A673 (cell line): ENCODE measurements at regions of chr11 and their contacts with region 1.

Region 1: DNA sequence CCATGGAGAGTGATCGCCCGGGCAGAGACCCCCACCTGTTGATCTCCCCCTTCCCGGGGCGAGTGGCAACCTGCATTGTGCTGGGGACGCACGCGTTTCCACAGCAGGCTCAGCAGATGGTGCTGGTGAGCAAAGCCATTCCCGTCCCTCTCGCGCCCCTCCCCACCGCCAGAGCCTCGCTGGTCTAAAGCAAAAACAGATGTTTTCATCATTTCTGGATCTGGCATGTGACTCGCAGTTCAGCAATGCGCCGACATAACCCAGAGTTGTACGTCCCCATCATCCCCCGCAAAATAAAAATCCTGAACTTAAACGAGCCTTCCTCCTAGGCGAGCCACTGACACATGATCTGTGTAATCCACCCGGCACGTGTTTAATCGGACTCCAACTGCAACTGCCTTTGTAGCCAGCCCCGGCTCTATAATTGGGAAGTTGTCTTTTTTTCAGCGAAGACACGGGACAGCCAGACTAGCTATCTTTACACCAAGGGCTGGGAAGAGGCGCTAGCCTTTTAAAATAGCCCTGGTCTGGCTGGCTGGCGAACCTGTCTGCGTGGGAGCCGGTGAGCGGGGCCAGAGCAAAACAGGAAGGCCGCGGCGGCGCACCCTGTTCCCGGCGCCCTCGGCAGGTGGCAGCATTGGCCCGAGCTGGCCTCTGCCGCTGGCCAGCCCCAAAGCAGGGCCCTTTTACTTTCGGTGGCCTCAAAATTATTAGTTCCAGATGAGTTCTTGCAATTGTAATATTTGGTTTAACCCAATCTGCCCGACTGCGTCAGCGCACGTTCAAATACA is 203.0 kb upstream of the SORL1-AS1 start:
- DNase-seq: peak; percentile 97
- H3K4me3 ChIP-seq: peak overlapping the region; percentile 49
- H3K27ac ChIP-seq: peak overlapping the region; percentile 96
- H3K4me1 ChIP-seq: peaks cover 38% of the 10 kb centered on the region
- H3K27me3 ChIP-seq: no peaks in the 10 kb centered on the region
- CTCF ChIP-seq: peak; percentile 89

Region 2: DNA sequence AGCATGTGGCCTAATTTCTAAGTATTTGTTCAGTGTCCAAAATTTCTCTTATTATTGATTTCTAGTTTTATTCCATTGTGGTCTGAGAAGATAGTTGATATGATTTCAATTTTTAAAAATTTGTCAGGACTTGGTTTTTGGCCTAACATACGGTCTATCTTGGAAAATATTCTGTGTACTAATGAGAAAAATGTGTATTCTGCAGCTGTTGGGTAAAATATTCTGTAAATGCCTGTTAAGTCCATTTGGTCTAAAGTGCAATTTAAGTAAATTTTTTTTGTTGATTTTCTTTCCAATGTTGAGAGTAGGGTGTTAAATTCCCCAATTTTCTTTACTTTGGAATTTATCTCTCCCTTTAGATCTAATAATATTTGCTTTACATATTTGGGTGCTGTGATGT is 476.4 kb before region 1 on chr11:
- CTCF ChIA-PET with region 1: no interaction called
- POLR2A ChIA-PET with region 1: no interaction called
- intact Hi-C with region 1: no loop called
- DNase-seq: no peak
- H3K4me3 ChIP-seq: no peak overlapping the region
- H3K27ac ChIP-seq: no peak overlapping the region
- H3K4me1 ChIP-seq: no peaks in the 10 kb centered on the region
- H3K27me3 ChIP-seq: no peaks in the 10 kb centered on the region
- CTCF ChIP-seq: no peak

Region 3: GRCh38 chr11:121841487-121842191 is 185.9 kb after region 1 on chr11:
- CTCF ChIA-PET with region 1: no interaction called
- POLR2A ChIA-PET with region 1: no interaction called
- intact Hi-C with region 1: loop called (anchors 10 kb)
- DNase-seq: peak; percentile 95
- H3K4me3 ChIP-seq: no peak overlapping the region
- H3K27ac ChIP-seq: peak overlapping the region; percentile 78
- H3K4me1 ChIP-seq: peaks cover 33% of the 10 kb centered on the region
- H3K27me3 ChIP-seq: no peaks in the 10 kb centered on the region
- CTCF ChIP-seq: no peak

Region 4: GRCh38 chr11:121929581-121929980 is 273.8 kb after region 1 on chr11:
- CTCF ChIA-PET with region 1: no interaction called
- POLR2A ChIA-PET with region 1: no interaction called
- intact Hi-C with region 1: loop called (anchors 2 kb)
- DNase-seq: peak; percentile 96
- H3K4me3 ChIP-seq: peak overlapping the region; percentile 38
- H3K27ac ChIP-seq: peak overlapping the region; percentile 79
- H3K4me1 ChIP-seq: peaks cover 28% of the 10 kb centered on the region
- H3K27me3 ChIP-seq: no peaks in the 10 kb centered on the region
- CTCF ChIP-seq: no peak

Region 5: GRCh38 chr11:122020902-122021301 is 365.2 kb after region 1 on chr11:
- CTCF ChIA-PET with region 1: no interaction called
- POLR2A ChIA-PET with region 1: no interaction called
- intact Hi-C with region 1: loop called (anchors 5 kb)
- DNase-seq: peak; percentile 70
- H3K4me3 ChIP-seq: no peak overlapping the region
- H3K27ac ChIP-seq: no peak overlapping the region
- H3K4me1 ChIP-seq: peaks cover 7% of the 10 kb centered on the region
- H3K27me3 ChIP-seq: no peaks in the 10 kb centered on the region
- CTCF ChIP-seq: peak; percentile 82

Region 6: GRCh38 chr11:122101625-122102291 is 446.0 kb after region 1 on chr11:
- CTCF ChIA-PET with region 1: interaction called, 23 read pairs
- POLR2A ChIA-PET with region 1: interaction called, 3 read pairs
- intact Hi-C with region 1: loop called (anchors 1 kb)
- DNase-seq: peak; percentile 93
- H3K4me3 ChIP-seq: peak overlapping the region; percentile 64
- H3K27ac ChIP-seq: peak overlapping the region; percentile 78
- H3K4me1 ChIP-seq: peaks cover 48% of the 10 kb centered on the region
- H3K27me3 ChIP-seq: no peaks in the 10 kb centered on the region
- CTCF ChIP-seq: peak; percentile 88

Region 7: GRCh38 chr11:122202951-122203456 is 547.3 kb after region 1 on chr11:
- CTCF ChIA-PET with region 1: interaction called, 5 read pairs
- POLR2A ChIA-PET with region 1: no interaction called
- intact Hi-C with region 1: loop called (anchors 1 kb)
- DNase-seq: peak; percentile 90
- H3K4me3 ChIP-seq: peak overlapping the region; percentile 39
- H3K27ac ChIP-seq: no peak overlapping the region
- H3K4me1 ChIP-seq: peaks cover 17% of the 10 kb centered on the region
- H3K27me3 ChIP-seq: no peaks in the 10 kb centered on the region
- CTCF ChIP-seq: peak; percentile 99

Region 8: DNA sequence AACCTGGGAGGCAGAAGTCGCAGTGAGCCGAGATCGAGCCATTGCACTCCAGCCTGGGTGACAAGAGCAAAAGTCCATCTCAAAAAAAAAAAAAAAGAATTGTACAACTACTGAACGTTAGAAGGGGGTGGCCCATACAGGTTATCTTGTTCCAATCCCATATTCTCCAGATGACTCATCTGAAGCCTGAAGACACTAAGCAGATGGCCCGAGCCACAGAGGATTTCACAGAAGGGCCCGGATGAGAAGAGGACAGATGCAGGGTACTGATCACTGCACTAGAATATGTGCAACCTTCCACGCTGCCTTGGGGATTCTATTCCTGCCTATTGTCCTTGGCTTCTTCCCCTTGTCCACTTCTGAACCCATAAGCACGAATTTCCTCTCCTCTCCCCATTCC is 928.9 kb after region 1 on chr11:
- CTCF ChIA-PET with region 1: no interaction called
- POLR2A ChIA-PET with region 1: no interaction called
- intact Hi-C with region 1: loop called (anchors 10 kb)
- DNase-seq: no peak
- H3K4me3 ChIP-seq: no peak overlapping the region
- H3K27ac ChIP-seq: no peak overlapping the region
- H3K4me1 ChIP-seq: no peaks in the 10 kb centered on the region
- H3K27me3 ChIP-seq: no peaks in the 10 kb centered on the region
- CTCF ChIP-seq: no peak